Prostate gland (tissue), 2 donors: ENCODE measurements at regions of chr10 and their contacts with region 1.

Region 1: GRCh38 chr10:116683821-116684220 is 58.5 kb downstream of the HSPA12A start:
- DNase-seq: no peak
- H3K4me3 ChIP-seq: no peak overlapping the region
- H3K27ac ChIP-seq: no peak overlapping the region
- H3K4me1 ChIP-seq: no peaks in the 10 kb centered on the region
- H3K27me3 ChIP-seq: no peaks in the 10 kb centered on the region
- CTCF ChIP-seq: no peak
- POLR2A ChIP-seq: no peak

Region 2: DNA sequence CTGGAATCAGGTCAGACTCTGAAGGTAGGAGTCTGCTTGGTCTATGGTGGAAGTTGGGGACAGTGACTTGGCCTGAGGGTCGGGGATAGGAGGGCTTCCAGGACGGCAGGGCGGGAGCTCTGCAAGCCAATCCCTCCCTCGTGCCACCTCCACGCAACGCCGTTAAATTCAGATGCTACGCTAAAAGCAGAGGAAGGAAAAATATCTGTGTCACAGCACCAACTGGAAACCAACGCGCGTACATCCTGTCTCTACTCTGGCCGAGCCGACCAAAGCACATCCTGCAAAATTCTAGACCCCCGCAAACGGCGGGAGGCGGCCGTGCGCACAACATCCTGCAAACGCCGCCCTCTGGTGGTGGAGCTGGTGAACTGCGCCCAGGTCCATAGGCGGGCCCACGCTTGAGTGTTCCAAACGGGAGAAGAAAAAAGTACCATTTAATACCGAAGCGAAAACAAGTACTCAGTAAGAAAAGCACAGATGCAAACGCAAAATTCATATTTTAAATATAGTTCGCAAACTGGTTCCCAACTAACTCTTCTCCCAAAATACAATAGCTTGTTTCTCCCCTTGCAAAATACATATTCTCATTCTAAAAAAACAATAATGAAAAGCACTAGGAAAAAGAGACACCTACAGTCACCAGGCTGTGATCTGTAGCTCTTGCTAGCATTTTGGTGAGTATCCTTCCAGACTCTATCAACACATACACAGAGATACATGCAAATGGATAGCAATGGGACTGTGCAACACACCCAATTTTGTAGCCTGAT is 104.3 kb after region 1 on chr10:
- intact Hi-C with region 1: loop called (anchors 5 kb)
- DNase-seq: peak; percentile 53
- H3K4me3 ChIP-seq: peak overlapping the region in 1 of 2 donors; percentile 16
- H3K27ac ChIP-seq: no peak overlapping the region
- H3K4me1 ChIP-seq: no peaks in the 10 kb centered on the region
- H3K27me3 ChIP-seq: no peaks in the 10 kb centered on the region
- CTCF ChIP-seq: peak; percentile 89 to 97 (median 96)
- POLR2A ChIP-seq: no peak

Region 3: GRCh38 chr10:117167789-117168674 is 484.2 kb after region 1 on chr10:
- intact Hi-C with region 1: loop called (anchors 5 kb)
- DNase-seq: no peak
- H3K4me3 ChIP-seq: peak overlapping the region in 1 of 2 donors; percentile 0
- H3K27ac ChIP-seq: no peak overlapping the region
- H3K4me1 ChIP-seq: no peaks in the 10 kb centered on the region
- H3K27me3 ChIP-seq: peaks cover 54% of the 10 kb centered on the region
- CTCF ChIP-seq: peak; percentile 56 to 80 (median 70)
- POLR2A ChIP-seq: no peak